Natural killer cell (primary cell): ENCODE measurements at regions of chr11 and their contacts with region 1.

Region 1: GRCh38 chr11:36354221-36355003 is 58.3 kb downstream of the PRR5L start:
- DNase-seq: no peak
- ATAC-seq: peak; percentile 4 to 31 (median 26)
- H3K4me3 ChIP-seq: no peak overlapping the region
- H3K4me3 Mint-ChIP-seq: peak overlapping the region; percentile 70
- H3K27ac ChIP-seq: no peak overlapping the region
- H3K27ac Mint-ChIP-seq: peak overlapping the region; percentile 25 to 73
- H3K4me1 ChIP-seq: peaks cover 26% of the 10 kb centered on the region
- H3K4me1 Mint-ChIP-seq: peaks cover 57 to 72% of the 10 kb centered on the region in 2 donors
- H3K27me3 ChIP-seq: peaks cover 2% of the 10 kb centered on the region
- H3K27me3 Mint-ChIP-seq: peaks cover 0 to 3% of the 10 kb centered on the region in 2 donors
- CTCF ChIP-seq: no peak

Region 2: GRCh38 chr11:36372101-36372767 is 17.8 kb after region 1 on chr11:
- intact Hi-C with region 1: no loop called
- DNase-seq: no peak
- ATAC-seq: no peak
- H3K4me3 ChIP-seq: no peak overlapping the region
- H3K4me3 Mint-ChIP-seq: no peak overlapping the region
- H3K27ac ChIP-seq: no peak overlapping the region
- H3K27ac Mint-ChIP-seq: no peak overlapping the region
- H3K4me1 ChIP-seq: peaks cover 19% of the 10 kb centered on the region
- H3K4me1 Mint-ChIP-seq: peaks cover 26 to 30% of the 10 kb centered on the region in 2 donors
- H3K27me3 ChIP-seq: no peaks in the 10 kb centered on the region
- H3K27me3 Mint-ChIP-seq: peaks cover 0 to 5% of the 10 kb centered on the region in 2 donors
- CTCF ChIP-seq: no peak

Region 3: GRCh38 chr11:36385121-36385970 is 30.9 kb after region 1 on chr11:
- intact Hi-C with region 1: loop called (anchors 2 kb)
- DNase-seq: peak in 1 of 2 donors; percentile 59
- ATAC-seq: peak; percentile 79 to 86 (median 83)
- H3K4me3 ChIP-seq: no peak overlapping the region
- H3K4me3 Mint-ChIP-seq: peak overlapping the region; percentile 80
- H3K27ac ChIP-seq: peak overlapping the region; percentile 75
- H3K27ac Mint-ChIP-seq: peak overlapping the region; percentile 90 to 93
- H3K4me1 ChIP-seq: peaks cover 72% of the 10 kb centered on the region
- H3K4me1 Mint-ChIP-seq: peaks cover 84 to 91% of the 10 kb centered on the region in 2 donors
- H3K27me3 ChIP-seq: no peaks in the 10 kb centered on the region
- H3K27me3 Mint-ChIP-seq: no peaks in the 10 kb centered on the region
- CTCF ChIP-seq: no peak

Region 4: DNA sequence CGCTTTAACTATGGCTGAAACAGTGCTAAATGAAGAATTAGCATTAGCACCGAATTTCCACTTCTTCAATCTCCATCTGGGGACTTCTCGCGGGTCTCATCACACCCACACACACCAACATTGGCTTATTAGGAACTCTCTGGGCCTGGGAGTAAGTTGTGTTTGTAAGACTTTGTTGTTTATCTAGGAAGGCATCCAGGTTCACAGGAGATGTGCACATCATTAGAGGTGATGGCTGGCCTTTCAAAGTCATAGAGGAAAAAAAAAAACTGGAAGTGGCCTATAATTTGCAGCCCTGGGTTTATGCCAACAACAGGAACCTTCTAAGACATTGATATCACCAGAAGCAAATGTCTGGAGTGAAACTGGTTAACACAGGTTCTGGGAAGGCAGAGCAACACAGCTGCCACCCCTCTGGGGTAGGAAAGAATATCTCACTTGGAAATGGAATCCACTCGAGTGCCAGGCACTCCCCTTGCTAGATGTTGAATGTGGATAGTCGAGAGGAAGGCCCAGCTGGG is 71.2 kb after region 1 on chr11:
- intact Hi-C with region 1: loop called (anchors 5 kb)
- DNase-seq: no peak
- ATAC-seq: no peak
- H3K4me3 ChIP-seq: no peak overlapping the region
- H3K4me3 Mint-ChIP-seq: peak overlapping the region; percentile 75
- H3K27ac ChIP-seq: peak overlapping the region; percentile 65
- H3K27ac Mint-ChIP-seq: peak overlapping the region; percentile 89 to 97
- H3K4me1 ChIP-seq: peaks cover 63% of the 10 kb centered on the region
- H3K4me1 Mint-ChIP-seq: peaks cover 70 to 78% of the 10 kb centered on the region in 2 donors
- H3K27me3 ChIP-seq: no peaks in the 10 kb centered on the region
- H3K27me3 Mint-ChIP-seq: no peaks in the 10 kb centered on the region
- CTCF ChIP-seq: no peak

Region 5: GRCh38 chr11:36478700-36479329 is 124.4 kb after region 1 on chr11:
- intact Hi-C with region 1: loop called (anchors 1 kb)
- DNase-seq: peak in 1 of 2 donors; percentile 68
- ATAC-seq: peak; percentile 57 to 65 (median 59)
- H3K4me3 ChIP-seq: no peak overlapping the region
- H3K4me3 Mint-ChIP-seq: no peak overlapping the region
- H3K27ac ChIP-seq: no peak overlapping the region
- H3K27ac Mint-ChIP-seq: peak overlapping the region in 1 of 2 donors; percentile 63
- H3K4me1 ChIP-seq: peaks cover 6% of the 10 kb centered on the region
- H3K4me1 Mint-ChIP-seq: peaks cover 8 to 14% of the 10 kb centered on the region in 2 donors
- H3K27me3 ChIP-seq: no peaks in the 10 kb centered on the region
- H3K27me3 Mint-ChIP-seq: no peaks in the 10 kb centered on the region
- CTCF ChIP-seq: peak; percentile 58

Region 6: GRCh38 chr11:36492724-36493304 is 138.4 kb after region 1 on chr11:
- intact Hi-C with region 1: loop called (anchors 1 kb)
- DNase-seq: peak in 1 of 2 donors; percentile 81
- ATAC-seq: peak; percentile 72 to 79 (median 75)
- H3K4me3 ChIP-seq: no peak overlapping the region
- H3K4me3 Mint-ChIP-seq: no peak overlapping the region
- H3K27ac ChIP-seq: no peak overlapping the region
- H3K27ac Mint-ChIP-seq: peak overlapping the region; percentile 62 to 68
- H3K4me1 ChIP-seq: peaks cover 5% of the 10 kb centered on the region
- H3K4me1 Mint-ChIP-seq: peaks cover 25 to 29% of the 10 kb centered on the region in 2 donors
- H3K27me3 ChIP-seq: no peaks in the 10 kb centered on the region
- H3K27me3 Mint-ChIP-seq: no peaks in the 10 kb centered on the region
- CTCF ChIP-seq: peak; percentile 86